ENCODE measurements at regions of chr4 and their contacts with region 1.

Region 1: DNA sequence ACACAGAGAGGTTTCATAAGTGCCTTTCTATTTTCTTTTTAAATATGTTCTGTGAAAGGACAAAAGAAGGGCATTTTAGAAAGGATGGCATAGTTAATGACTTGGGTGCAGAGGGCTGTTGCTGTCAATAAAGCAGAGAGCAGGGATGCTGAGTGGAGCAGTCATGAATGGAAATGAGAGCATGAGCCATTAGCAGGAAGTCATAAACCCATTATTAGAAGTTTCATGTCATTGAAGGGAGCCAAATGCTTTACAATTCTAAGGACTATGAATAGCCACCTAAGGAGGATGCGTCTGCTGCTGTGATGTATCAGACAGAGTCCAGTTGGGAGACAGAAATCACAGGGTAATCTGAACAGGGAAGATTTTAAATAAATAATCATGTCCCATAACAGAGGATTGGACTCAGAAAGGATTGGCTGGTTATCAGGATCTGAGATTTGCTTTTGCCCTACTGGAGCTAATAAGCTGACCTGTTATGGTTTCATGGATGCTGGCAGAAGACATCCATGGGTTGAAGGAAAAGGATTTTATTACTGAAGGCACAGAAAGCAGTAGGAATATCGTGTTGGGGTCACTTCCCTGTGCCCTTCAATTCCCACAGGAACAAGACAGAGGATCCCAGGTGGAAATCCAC is 47.5 kb upstream of the WDR19 start:
- DNase-seq: no peak
- H3K4me3 Mint-ChIP-seq: no peak overlapping the region
- H3K27ac Mint-ChIP-seq: no peak overlapping the region
- H3K4me1 Mint-ChIP-seq: peaks cover 5% of the 10 kb centered on the region
- H3K27me3 Mint-ChIP-seq: no peaks in the 10 kb centered on the region

Region 2: GRCh38 chr4:38461342-38461741 is 673.5 kb before region 1 on chr4:
- intact Hi-C with region 1: no loop called
- DNase-seq: no peak
- H3K4me3 Mint-ChIP-seq: no peak overlapping the region
- H3K27ac Mint-ChIP-seq: no peak overlapping the region
- H3K4me1 Mint-ChIP-seq: peaks cover 3% of the 10 kb centered on the region
- H3K27me3 Mint-ChIP-seq: peaks cover 12% of the 10 kb centered on the region

Region 3: GRCh38 chr4:38574559-38575333 is 560.1 kb before region 1 on chr4:
- intact Hi-C with region 1: no loop called
- DNase-seq: no peak
- H3K4me3 Mint-ChIP-seq: no peak overlapping the region
- H3K27ac Mint-ChIP-seq: no peak overlapping the region
- H3K4me1 Mint-ChIP-seq: no peaks in the 10 kb centered on the region
- H3K27me3 Mint-ChIP-seq: peaks cover 14% of the 10 kb centered on the region

Region 4: DNA sequence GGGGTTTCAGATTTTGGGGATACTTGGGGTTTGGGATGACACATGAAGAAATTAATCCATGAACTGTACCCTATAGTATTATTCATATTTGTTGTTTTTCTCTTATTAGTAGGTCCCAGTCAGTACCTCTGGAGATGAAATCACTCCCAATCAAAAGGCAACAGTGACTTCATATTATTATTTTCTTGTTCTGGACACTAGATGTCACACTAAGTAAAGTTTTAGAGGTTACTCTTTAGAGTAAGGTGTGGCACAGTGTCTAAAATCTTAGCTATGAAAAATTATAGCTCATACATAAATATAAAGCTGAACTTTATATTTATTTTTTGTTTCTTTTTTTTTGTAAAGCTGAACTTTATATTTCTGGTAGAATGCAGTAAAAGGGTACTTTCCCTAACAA is 232.1 kb before region 1 on chr4:
- intact Hi-C with region 1: loop called (anchors 1 kb)
- DNase-seq: no peak
- H3K4me3 Mint-ChIP-seq: no peak overlapping the region
- H3K27ac Mint-ChIP-seq: no peak overlapping the region
- H3K4me1 Mint-ChIP-seq: no peaks in the 10 kb centered on the region
- H3K27me3 Mint-ChIP-seq: no peaks in the 10 kb centered on the region